ENCODE measurements at regions of chr2 and their contacts with region 1.

Region 1: DNA sequence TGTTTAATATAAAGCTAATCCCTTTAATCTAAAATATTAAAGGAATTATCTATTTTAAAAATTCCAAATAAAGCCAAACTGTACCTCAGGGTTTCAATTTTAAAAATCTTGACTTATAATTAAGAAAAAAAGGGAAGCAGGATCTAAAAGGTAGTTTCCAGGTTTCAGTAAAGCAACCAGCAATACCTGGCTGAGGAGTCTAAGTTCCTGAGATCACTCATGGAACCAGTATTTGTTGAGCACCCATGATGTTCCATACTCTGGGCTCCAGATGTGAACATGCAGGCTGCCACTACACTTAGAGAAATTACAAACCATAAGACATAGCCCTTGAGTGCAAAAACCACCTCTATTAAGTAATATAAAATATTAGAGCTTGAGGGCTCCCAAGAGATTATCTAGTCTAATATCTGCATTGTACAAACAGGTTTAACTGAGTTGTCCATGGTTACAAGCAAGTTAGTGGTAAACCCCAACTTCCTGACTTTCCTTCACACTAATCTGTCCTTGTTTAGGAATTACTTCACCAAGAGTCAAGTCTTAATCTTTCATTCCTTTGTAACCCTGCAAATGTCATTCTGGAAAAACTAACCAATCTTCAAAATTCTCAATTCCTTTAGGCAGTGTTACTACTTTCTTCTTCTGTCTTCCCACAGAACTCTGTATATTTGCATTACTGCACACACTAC is 49.2 kb downstream of the CLASP1 start:
- DNase-seq: no peak
- ATAC-seq: no peak
- H3K4me3 ChIP-seq: no peak overlapping the region
- H3K27ac ChIP-seq: no peak overlapping the region
- H3K4me1 ChIP-seq: peaks cover 32 to 38% (median 36%) of the 10 kb centered on the region in 3 donors
- H3K27me3 ChIP-seq: no peaks in the 10 kb centered on the region
- CTCF ChIP-seq: no peak

Region 2: GRCh38 chr2:121634354-121635307 is 34.5 kb after region 1 on chr2:
- intact Hi-C with region 1: loop called in 1 of 3 experiments (anchors 5 kb)
- DNase-seq: no peak
- ATAC-seq: peak in 2 of 4 donors; percentile 18 to 22
- H3K4me3 ChIP-seq: no peak overlapping the region
- H3K27ac ChIP-seq: no peak overlapping the region
- H3K4me1 ChIP-seq: peaks cover 0 to 15% (median 9%) of the 10 kb centered on the region in 3 donors
- H3K27me3 ChIP-seq: no peaks in the 10 kb centered on the region
- CTCF ChIP-seq: no peak